ENCODE measurements at regions of chr12 and their contacts with region 1.

Region 1: GRCh38 chr12:14257734-14258574 is 107.5 kb upstream of the ATF7IP start:
- DNase-seq: peak; percentile 98

Region 2: GRCh38 chr12:13864081-13864673 is 393.8 kb before region 1 on chr12:
- intact Hi-C with region 1: no loop called
- DNase-seq: peak; percentile 83

Region 3: GRCh38 chr12:14148489-14149270 is 109.3 kb before region 1 on chr12:
- intact Hi-C with region 1: no loop called
- DNase-seq: no peak

Region 4: GRCh38 chr12:14239350-14239934 is 18.5 kb before region 1 on chr12:
- intact Hi-C with region 1: no loop called
- DNase-seq: no peak

Region 5: DNA sequence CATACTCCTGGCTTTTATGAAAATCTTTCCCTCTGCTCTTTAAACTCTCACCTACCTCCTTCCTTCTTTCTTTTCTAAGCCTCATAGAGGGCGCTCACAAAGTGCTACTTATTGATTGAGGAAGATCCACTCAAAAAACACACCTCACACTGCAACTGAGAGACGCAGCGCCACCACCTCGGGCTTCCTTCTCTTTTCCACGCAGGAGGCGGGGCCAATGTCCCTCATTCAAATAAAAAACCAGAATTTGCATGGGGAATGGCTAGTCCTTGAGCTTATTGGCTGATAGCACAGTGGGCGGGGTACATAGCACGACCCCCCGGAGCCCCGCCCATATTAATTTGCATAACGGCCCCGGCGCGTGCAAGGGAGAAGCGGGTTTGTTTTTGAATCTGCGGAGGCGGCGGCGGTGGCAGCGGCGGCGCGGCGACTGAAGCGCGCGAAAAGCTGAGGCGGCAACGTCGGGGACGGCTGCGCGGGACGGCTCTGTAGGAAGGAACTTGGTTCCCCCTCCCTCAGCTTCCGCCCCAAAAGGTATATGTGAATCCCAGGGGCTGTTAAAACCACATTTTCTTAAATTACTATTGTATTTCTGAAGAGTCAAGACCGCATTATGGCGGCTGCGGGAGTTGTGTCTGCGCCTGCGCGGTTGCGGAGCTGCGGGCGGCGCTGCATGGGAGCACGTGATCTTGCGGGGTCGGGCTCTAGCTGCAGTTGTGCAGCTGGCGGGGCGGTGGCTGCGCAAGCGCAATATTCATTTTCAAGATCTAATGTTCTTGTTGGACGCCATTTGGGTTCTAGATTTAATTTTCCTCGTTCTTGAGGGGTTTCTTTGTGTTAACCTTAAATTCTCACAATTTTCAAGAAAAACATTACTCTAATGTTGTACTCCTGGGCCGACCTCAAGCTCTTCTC is 107.6 kb after region 1 on chr12 and contains the start of gene ATF7IP:
- intact Hi-C with region 1: loop called (anchors 1 kb)
- DNase-seq: peak; percentile 97
- total RNA-seq, gene ATF7IP: 61.6 TPM

Region 6: DNA sequence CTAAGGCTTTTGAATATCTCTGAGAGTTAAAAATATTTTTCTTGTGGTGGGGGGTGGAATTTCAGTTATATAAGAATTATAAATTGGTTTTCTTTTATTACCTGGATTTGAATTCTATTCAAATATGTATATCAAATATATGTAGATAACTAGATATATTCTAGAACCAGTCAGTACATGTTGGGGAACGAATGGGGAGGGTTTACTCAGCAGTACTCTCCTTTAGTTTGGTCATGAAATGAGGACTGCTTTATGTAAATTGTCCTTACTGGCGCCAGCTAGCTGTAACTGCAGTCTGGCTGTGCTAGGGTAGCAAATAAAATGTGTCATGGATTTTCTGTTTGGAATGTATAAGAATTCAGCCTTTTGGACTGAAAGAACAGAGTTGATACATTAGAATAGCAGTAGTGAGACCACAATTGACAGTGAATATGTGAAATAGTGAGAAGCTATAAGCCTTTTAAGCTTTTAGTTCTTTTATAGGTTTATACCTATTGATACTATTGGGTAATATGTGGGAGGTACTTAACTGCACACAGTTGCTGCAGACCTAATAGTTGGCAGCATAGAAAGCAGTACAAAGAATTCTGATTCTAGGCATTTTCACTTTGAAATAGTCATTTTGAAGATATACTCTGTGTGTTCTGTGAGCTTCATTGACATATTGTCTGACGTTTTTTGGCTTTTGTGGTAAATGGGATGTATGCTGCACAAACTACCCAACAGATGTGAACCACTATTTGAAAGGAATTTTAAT is 136.5 kb after region 1 on chr12:
- intact Hi-C with region 1: loop called (anchors 5 kb)
- DNase-seq: no peak

Region 7: GRCh38 chr12:14417715-14418114 is 159.8 kb after region 1 on chr12:
- intact Hi-C with region 1: loop called (anchors 1 kb)
- DNase-seq: peak; percentile 80

Region 8: DNA sequence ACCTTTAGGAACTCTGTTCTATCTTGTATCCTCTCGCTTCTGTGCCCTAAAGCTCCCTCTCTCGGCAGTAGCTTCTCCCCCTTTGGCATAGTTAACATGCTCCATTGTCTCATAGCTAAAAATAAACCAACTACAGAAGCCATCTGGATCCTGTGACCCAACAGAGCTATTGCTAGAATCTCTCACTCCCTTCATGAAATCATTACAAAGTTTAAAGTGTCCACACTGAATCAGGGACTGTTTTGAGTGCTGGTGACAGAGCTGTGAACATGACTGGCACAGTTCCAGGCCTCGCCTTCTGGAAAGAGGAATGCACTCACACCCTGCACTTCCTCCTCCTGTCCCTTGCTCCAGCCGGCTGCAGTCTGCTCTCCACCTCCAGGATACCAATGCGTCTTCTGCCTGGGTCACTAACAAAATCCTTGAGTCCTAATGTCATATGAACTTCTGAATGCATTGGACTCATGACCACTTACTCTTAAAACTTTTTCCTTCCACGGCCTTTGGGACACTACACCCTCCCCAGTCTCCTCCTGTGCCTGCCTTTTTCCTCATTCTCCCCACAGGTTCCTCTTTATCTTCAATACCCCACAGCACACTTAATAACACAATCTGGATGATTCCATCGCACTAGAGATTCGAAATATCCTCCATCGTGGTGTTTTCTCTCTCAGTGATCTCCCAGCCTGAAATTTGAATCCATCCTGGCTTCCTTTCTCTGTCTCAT is 296.5 kb after region 1 on chr12:
- intact Hi-C with region 1: loop called (anchors 2 kb)
- DNase-seq: peak; percentile 93